Panc1 (cell line): ENCODE measurements at regions of chr16 and their contacts with region 1.

Region 1: GRCh38 chr16:23629516-23629915 is 11.6 kb downstream of the PALB2 start:
- DNase-seq: no peak
- ATAC-seq: no peak
- H3K4me3 ChIP-seq: no peak overlapping the region
- H3K27ac ChIP-seq: no peak overlapping the region
- H3K4me1 ChIP-seq: no peaks in the 10 kb centered on the region
- H3K27me3 ChIP-seq: no peaks in the 10 kb centered on the region
- CTCF ChIP-seq: no peak

Region 2: DNA sequence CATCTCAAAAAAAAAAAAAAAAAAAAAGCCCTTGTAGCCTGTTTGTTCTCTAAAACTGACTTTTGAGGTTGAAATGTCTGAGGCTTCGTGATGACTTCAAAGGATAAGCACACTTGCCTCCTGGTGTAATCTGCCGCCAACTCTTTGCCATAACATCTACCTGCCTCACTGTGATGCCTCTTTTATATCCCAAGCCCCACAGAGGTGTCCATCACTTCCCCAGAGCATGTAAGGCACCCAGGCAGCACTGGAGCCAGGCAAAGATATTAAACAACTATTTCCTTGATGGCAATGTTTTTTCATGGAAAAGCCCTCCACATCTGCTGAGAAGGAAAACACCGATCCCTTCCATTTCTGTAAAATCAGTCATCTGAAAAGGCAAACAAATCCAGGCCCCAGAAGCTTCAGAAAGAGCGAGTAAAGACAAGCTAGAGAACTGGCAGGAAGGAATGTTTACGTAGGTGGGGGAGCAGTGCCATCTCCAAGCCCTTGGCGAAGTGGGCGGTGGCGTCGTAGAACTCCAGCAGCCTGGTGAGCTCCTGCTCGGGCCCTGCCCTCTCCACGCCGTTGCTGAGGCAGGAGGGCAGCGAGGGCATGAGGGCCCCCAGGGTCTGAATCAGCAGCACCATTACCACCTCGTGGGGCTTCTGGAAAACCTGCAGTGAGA is 205.1 kb before region 1 on chr16:
- CTCF ChIA-PET with region 1: no interaction called
- POLR2A ChIA-PET with region 1: no interaction called
- in situ Hi-C with region 1: no loop called
- intact Hi-C with region 1: no loop called
- DNase-seq: no peak
- ATAC-seq: peak; percentile 59
- H3K4me3 ChIP-seq: no peak overlapping the region
- H3K27ac ChIP-seq: peak overlapping the region; percentile 84
- H3K4me1 ChIP-seq: peaks cover 34% of the 10 kb centered on the region
- H3K27me3 ChIP-seq: no peaks in the 10 kb centered on the region
- CTCF ChIP-seq: no peak

Region 3: GRCh38 chr16:23770744-23771426 is 141.4 kb after region 1 on chr16:
- CTCF ChIA-PET with region 1: no interaction called
- POLR2A ChIA-PET with region 1: no interaction called
- in situ Hi-C with region 1: no loop called
- intact Hi-C with region 1: no loop called
- DNase-seq: no peak
- ATAC-seq: no peak
- H3K4me3 ChIP-seq: no peak overlapping the region
- H3K27ac ChIP-seq: no peak overlapping the region
- H3K4me1 ChIP-seq: no peaks in the 10 kb centered on the region
- H3K27me3 ChIP-seq: no peaks in the 10 kb centered on the region
- CTCF ChIP-seq: no peak

Region 4: GRCh38 chr16:23987443-23987842 is 357.9 kb after region 1 on chr16:
- CTCF ChIA-PET with region 1: no interaction called
- POLR2A ChIA-PET with region 1: interaction called, 14 read pairs
- in situ Hi-C with region 1: no loop called
- intact Hi-C with region 1: no loop called
- DNase-seq: no peak
- ATAC-seq: no peak
- H3K4me3 ChIP-seq: no peak overlapping the region
- H3K27ac ChIP-seq: no peak overlapping the region
- H3K4me1 ChIP-seq: no peaks in the 10 kb centered on the region
- H3K27me3 ChIP-seq: peaks cover 15% of the 10 kb centered on the region
- CTCF ChIP-seq: no peak